CD4-positive, alpha-beta T cell (primary cell): ENCODE measurements at regions of chr1 and their contacts with region 1.

Region 1: GRCh38 chr1:96727860-96728259 is 6.3 kb downstream of the PTBP2 start:
- DNase-seq: no peak
- ATAC-seq: no peak
- H3K4me3 ChIP-seq: no peak overlapping the region
- H3K4me3 Mint-ChIP-seq: peak overlapping the region; percentile 4
- H3K27ac ChIP-seq: no peak overlapping the region
- H3K27ac Mint-ChIP-seq: no peak overlapping the region
- H3K4me1 ChIP-seq: peaks cover 20% of the 10 kb centered on the region
- H3K4me1 Mint-ChIP-seq: peaks cover 70% of the 10 kb centered on the region
- H3K27me3 ChIP-seq: no peaks in the 10 kb centered on the region
- H3K27me3 Mint-ChIP-seq: no peaks in the 10 kb centered on the region
- CTCF ChIP-seq: no peak

Region 2: GRCh38 chr1:96698342-96698983 is 29.4 kb before region 1 on chr1:
- CTCF ChIA-PET with region 1: no interaction called
- POLR2A ChIA-PET with region 1: no interaction called
- intact Hi-C with region 1: no loop called
- DNase-seq: no peak
- ATAC-seq: no peak
- H3K4me3 ChIP-seq: no peak overlapping the region
- H3K4me3 Mint-ChIP-seq: no peak overlapping the region
- H3K27ac ChIP-seq: no peak overlapping the region
- H3K27ac Mint-ChIP-seq: no peak overlapping the region
- H3K4me1 ChIP-seq: no peaks in the 10 kb centered on the region
- H3K4me1 Mint-ChIP-seq: no peaks in the 10 kb centered on the region
- H3K27me3 ChIP-seq: no peaks in the 10 kb centered on the region
- H3K27me3 Mint-ChIP-seq: peaks cover 22% of the 10 kb centered on the region
- CTCF ChIP-seq: no peak

Region 3: DNA sequence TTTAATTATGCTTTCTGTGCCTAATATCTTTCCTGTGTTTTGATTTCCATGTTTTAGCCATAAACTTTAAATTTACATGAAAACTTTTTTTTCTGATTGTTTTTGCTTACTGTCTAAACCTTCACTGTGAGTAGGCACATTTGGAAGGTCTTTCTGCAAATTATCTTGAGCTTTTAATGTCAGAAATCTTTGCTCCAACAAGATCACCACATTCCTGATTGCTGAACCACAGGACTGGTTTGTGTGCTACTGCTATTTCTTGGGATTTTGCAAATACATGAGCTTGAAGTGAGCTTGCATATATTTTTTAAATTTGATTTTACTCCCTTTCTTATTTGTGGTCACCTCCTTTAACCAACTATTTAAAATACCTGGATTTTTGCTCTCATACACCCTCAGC is 55.0 kb after region 1 on chr1:
- CTCF ChIA-PET with region 1: no interaction called
- POLR2A ChIA-PET with region 1: interaction called, 3 read pairs
- intact Hi-C with region 1: loop called (anchors 5 to 10 kb)
- DNase-seq: no peak
- ATAC-seq: no peak
- H3K4me3 ChIP-seq: no peak overlapping the region
- H3K4me3 Mint-ChIP-seq: no peak overlapping the region
- H3K27ac ChIP-seq: no peak overlapping the region
- H3K27ac Mint-ChIP-seq: no peak overlapping the region
- H3K4me1 ChIP-seq: no peaks in the 10 kb centered on the region
- H3K4me1 Mint-ChIP-seq: no peaks in the 10 kb centered on the region
- H3K27me3 ChIP-seq: no peaks in the 10 kb centered on the region
- H3K27me3 Mint-ChIP-seq: no peaks in the 10 kb centered on the region
- CTCF ChIP-seq: no peak